ENCODE measurements at regions of chr1 and their contacts with region 1.

Region 1: DNA sequence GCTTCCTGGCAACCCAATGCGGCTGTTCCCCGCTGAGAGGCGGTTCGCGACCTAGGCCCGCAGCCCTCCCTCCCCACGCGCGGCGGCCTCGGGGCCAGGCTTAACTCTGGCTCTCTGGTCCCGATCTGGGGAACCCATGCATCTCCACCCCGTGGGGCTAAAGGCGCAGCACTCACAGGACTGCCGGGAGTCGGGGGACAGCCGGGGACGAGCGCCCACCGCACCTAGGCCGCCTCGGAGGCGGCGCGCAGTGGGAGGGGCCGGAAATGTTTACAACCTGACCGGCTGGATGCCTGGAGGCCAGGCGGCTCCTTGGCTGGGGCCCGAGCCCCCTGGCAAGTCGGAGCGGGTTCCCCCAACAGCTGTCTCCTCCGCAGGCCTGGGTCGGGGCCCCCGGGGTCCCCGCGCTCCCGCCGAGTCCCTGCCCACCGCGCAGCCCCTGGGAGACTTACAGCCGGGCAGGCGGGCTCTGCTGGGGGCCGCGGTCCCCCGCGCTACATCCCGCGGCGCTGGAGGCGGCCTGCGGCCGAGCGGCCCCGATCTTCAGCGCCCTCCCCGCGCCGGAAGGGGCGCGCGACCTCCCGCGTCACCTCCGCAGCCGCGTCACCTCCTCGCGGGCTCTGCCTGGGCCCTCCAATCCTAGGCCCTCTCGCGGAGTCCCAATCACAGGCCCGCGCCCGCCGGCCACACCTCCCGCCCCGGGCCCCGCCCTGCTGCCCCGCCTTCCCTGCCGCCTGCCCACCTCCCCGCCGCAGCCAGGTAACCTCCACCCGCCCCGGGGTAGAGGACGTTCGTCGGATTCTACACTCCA is at the start of gene ADIPOR1:
- DNase-seq: peak; percentile 93 to 94 (median 94)
- H3K4me3 ChIP-seq: peak within 1 kb of the TSS; percentile 44 to 78
- H3K4me3 Mint-ChIP-seq: peak within 1 kb of the TSS; percentile 89 to 97 (median 94)
- H3K27ac ChIP-seq: peak within 1 kb of the TSS; percentile 94
- H3K27ac Mint-ChIP-seq: peak within 1 kb of the TSS; percentile 91 to 99 (median 97)
- H3K4me1 ChIP-seq: peaks cover 54% of the 10 kb centered on the region
- H3K4me1 Mint-ChIP-seq: peaks cover 30 to 55% (median 47%) of the 10 kb centered on the region in 4 donors
- H3K27me3 ChIP-seq: no peaks in the 10 kb centered on the region
- H3K27me3 Mint-ChIP-seq: no peaks in the 10 kb centered on the region
- total RNA-seq, gene ADIPOR1: 52.6 to 58.3 TPM

Region 2: GRCh38 chr1:202976633-202977032 is 18.7 kb after region 1 on chr1:
- CTCF ChIA-PET with region 1: no interaction called
- POLR2A ChIA-PET with region 1: no interaction called
- intact Hi-C with region 1: no loop called
- DNase-seq: no peak
- H3K4me3 ChIP-seq: no peak overlapping the region
- H3K4me3 Mint-ChIP-seq: no peak overlapping the region
- H3K27ac ChIP-seq: no peak overlapping the region
- H3K27ac Mint-ChIP-seq: no peak overlapping the region
- H3K4me1 ChIP-seq: no peaks in the 10 kb centered on the region
- H3K4me1 Mint-ChIP-seq: peaks cover 0 to under 1% (median under 1%) of the 10 kb centered on the region in 4 donors
- H3K27me3 ChIP-seq: no peaks in the 10 kb centered on the region
- H3K27me3 Mint-ChIP-seq: peaks cover 21 to 26% of the 10 kb centered on the region in 2 donors

Region 3: GRCh38 chr1:202998836-202999750 is 41.2 kb after region 1 on chr1:
- CTCF ChIA-PET with region 1: interaction called, 4 read pairs
- POLR2A ChIA-PET with region 1: interaction called, 3 read pairs
- intact Hi-C with region 1: loop called (anchors 1 kb)
- DNase-seq: peak; percentile 57 to 69 (median 64)
- H3K4me3 ChIP-seq: no peak overlapping the region
- H3K4me3 Mint-ChIP-seq: peak overlapping the region in 5 of 8 donors; percentile 1 to 52 (median 11)
- H3K27ac ChIP-seq: no peak overlapping the region
- H3K27ac Mint-ChIP-seq: peak overlapping the region in 1 of 7 donors; percentile 10
- H3K4me1 ChIP-seq: peaks cover 4% of the 10 kb centered on the region
- H3K4me1 Mint-ChIP-seq: peaks cover 5 to 12% (median 6%) of the 10 kb centered on the region in 4 donors
- H3K27me3 ChIP-seq: peaks cover 7% of the 10 kb centered on the region
- H3K27me3 Mint-ChIP-seq: peaks cover 15 to 16% of the 10 kb centered on the region in 2 donors